B cell (primary cell): ENCODE measurements at regions of chr7 and their contacts with region 1.

Region 1: DNA sequence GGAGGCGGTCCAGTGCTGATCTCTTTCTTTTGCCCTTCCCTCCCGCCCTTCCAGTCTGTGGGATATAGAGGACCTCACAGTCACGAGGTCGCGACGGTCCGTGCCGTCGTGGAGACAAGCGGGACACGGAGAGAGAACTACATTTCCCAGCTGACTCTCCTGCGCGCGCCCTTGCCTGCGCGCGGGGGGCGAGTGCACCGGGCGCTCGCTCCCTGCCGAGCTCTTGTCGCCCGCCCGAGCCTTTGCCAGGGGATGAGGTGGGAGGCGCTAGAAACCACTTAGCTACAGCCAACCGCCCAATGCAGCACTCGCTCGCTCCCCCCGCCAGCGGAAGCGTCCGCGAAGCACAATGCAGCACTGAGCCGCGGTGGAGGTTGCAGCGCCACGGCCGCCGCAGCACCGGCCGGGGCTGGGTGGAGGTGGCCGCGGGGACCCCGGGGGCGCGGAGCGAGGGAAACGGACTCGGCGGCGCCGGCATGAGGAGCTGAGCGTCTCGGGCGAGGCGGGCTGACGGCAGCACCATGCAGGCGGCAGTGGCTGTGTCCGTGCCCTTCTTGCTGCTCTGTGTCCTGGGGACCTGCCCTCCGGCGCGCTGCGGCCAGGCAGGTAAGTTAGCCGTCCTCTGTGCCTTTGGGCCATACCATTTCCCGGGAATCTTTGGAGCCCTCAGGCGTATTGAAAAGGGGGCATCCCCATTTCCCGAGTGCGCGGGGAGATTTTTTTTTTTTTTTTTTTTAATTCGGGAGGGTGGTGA is at the start of gene ADAM22:
- DNase-seq: peak; percentile 87
- ATAC-seq: peak; percentile 96
- H3K4me3 ChIP-seq: peak within 1 kb of the TSS; percentile 46 to 81 (median 64)
- H3K4me3 Mint-ChIP-seq: peak within 1 kb of the TSS; percentile 92
- H3K27ac ChIP-seq: no peak within 1 kb of the TSS
- H3K27ac Mint-ChIP-seq: peak within 1 kb of the TSS; percentile 84
- H3K4me1 ChIP-seq: peaks cover 8 to 16% of the 10 kb centered on the region in 2 donors
- H3K4me1 Mint-ChIP-seq: peaks cover 19% of the 10 kb centered on the region
- H3K27me3 ChIP-seq: peaks cover 0 to 14% (median 2%) of the 10 kb centered on the region in 4 experiments
- H3K27me3 Mint-ChIP-seq: peaks cover 12% of the 10 kb centered on the region
- CTCF ChIP-seq: no peak
- total RNA-seq, gene ADAM22: 1.8 and 2.0 TPM in 2 replicates

Region 2: GRCh38 chr7:88219781-88220747 is 285.9 kb after region 1 on chr7 and contains the start of gene SRI:
- CTCF ChIA-PET with region 1: interaction called, 3 read pairs
- POLR2A ChIA-PET with region 1: no interaction called
- intact Hi-C with region 1: loop called (anchors 1 kb)
- DNase-seq: peak; percentile 94
- ATAC-seq: peak; percentile 96
- H3K4me3 ChIP-seq: peak within 1 kb of the TSS; percentile 83 to 91 (median 88)
- H3K4me3 Mint-ChIP-seq: peak within 1 kb of the TSS; percentile 94
- H3K27ac ChIP-seq: peak within 1 kb of the TSS; percentile 68 to 78
- H3K27ac Mint-ChIP-seq: peak within 1 kb of the TSS; percentile 95
- H3K4me1 ChIP-seq: peaks cover 13 to 25% of the 10 kb centered on the region in 2 donors
- H3K4me1 Mint-ChIP-seq: peaks cover 27% of the 10 kb centered on the region
- H3K27me3 ChIP-seq: no peaks in the 10 kb centered on the region
- H3K27me3 Mint-ChIP-seq: no peaks in the 10 kb centered on the region
- CTCF ChIP-seq: peak; percentile 98
- total RNA-seq, gene SRI: 46.9 and 49.9 TPM in 2 replicates